BJ (cell line): ENCODE measurements at regions of chr16 and their contacts with region 1.

Region 1: DNA sequence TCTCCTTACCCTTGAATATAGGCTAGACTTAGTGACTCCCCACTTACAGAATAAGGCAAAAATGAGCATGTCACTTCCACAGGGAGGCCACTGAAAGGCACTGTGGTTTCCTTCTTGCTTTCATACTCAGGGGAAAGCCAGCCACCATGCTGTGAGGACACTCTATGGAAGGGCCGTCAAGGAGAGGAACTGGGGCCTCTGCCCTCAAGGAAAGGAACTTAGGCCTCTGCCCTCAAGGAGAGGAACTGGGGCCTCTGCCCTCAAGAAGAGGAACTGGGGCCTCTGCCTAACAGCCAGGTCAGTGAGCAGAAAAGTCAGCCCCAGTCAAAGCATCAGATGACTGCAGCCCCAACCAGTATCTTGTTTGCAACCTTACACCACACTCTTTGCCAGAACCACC is 30.1 kb downstream of the VPS35 start:
- DNase-seq: no peak
- H3K4me3 ChIP-seq: no peak overlapping the region
- H3K27me3 ChIP-seq: no peaks in the 10 kb centered on the region
- CTCF ChIP-seq: no peak

Region 2: GRCh38 chr16:46673320-46674013 is 14.5 kb after region 1 on chr16:
- CTCF ChIA-PET with region 1: interaction called, 10 read pairs
- POLR2A ChIA-PET with region 1: interaction called, 3 read pairs
- DNase-seq: no peak
- H3K4me3 ChIP-seq: no peak overlapping the region
- H3K27me3 ChIP-seq: no peaks in the 10 kb centered on the region
- CTCF ChIP-seq: peak; percentile 96